ENCODE measurements at regions of chr11 and their contacts with region 1.

Region 1: DNA sequence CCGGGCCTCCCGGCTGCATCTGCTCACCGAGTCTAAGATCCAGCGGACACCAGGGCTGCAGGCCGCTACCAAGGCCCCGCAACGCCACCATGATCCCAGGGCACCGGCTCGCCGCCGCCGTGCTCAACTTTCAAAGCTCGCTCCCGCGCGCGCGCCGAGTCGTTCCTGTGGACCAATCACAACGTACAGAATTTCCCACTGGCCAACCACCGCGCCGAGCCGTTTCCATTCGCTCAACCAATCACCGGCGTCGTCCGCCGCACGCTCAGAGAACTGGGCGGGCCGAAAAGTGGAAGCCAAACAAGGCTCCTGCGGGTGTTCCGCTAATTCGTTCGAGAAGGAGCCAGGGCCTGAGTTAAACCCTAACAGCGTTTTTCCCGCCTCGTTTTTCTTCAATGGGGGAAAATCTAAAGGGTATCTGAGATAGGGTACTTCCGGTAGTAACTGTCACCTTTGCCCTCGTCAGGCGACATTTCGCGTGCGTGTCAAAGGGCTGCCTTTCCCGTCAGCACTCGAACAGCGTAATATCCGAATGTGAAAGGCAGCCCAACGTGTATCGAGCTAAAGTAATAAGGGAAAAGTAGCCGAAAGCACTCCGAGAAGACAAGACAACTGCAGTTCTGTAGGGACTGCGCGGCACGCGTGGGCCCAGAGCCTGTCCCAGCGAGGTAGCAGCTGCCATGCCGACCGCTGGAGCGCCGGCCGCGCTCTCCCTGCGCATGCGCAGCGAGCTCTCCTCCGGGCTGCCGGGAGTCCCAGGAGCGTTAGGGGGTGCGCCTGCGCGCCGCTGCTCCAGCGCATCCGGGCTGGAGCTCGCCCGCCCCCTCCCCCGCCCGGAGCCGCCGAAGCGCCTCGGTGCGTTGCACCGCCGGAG is at the starts of genes NCAPD3 and VPS26B:
- DNase-seq: peak; percentile 99
- ATAC-seq: peak; percentile 80
- H3K4me3 ChIP-seq: peak within 1 kb of the TSS; percentile 92
- H3K27ac ChIP-seq: peak within 1 kb of the TSS; percentile 76
- H3K4me1 ChIP-seq: peaks cover 30% of the 10 kb centered on the region
- H3K27me3 ChIP-seq: no peaks in the 10 kb centered on the region
- CTCF ChIP-seq: no peak
- total RNA-seq, gene NCAPD3: 74.5 and 85.0 TPM in 2 replicates
- total RNA-seq, gene VPS26B: 49.2 and 53.9 TPM in 2 replicates

Region 2: DNA sequence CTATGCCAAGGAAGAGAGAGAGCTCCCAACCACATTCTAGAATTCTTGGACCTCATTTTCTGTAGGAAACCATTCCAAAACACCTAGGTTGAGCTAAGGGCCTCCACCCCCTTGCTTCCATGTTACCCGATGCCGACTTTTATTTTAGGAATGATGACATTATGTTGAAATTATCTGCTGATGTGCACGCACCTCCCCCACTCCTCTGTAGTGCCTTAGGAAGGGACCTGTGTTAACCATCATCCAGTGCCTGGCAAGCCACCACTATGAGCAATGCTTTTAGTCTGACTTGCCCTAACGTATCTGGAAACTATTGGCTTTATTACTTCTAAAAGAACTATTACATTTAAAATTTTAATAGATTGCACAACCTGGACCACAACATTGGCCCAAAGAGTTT is 42.4 kb before region 1 on chr11:
- CTCF ChIA-PET with region 1: no interaction called
- POLR2A ChIA-PET with region 1: no interaction called
- intact Hi-C with region 1: no loop called
- DNase-seq: no peak
- ATAC-seq: no peak
- H3K4me3 ChIP-seq: no peak overlapping the region
- H3K27ac ChIP-seq: no peak overlapping the region
- H3K4me1 ChIP-seq: no peaks in the 10 kb centered on the region
- H3K27me3 ChIP-seq: no peaks in the 10 kb centered on the region
- CTCF ChIP-seq: no peak

Region 3: GRCh38 chr11:134253188-134253993 is 29.3 kb after region 1 on chr11 and contains the starts of genes ACAD8 and THYN1:
- CTCF ChIA-PET with region 1: no interaction called
- POLR2A ChIA-PET with region 1: no interaction called
- intact Hi-C with region 1: loop called (anchors 1 kb)
- DNase-seq: peak; percentile 98
- ATAC-seq: peak; percentile 99
- H3K4me3 ChIP-seq: peak within 1 kb of the TSS; percentile 82
- H3K27ac ChIP-seq: no peak within 1 kb of the TSS
- H3K4me1 ChIP-seq: peaks cover 17% of the 10 kb centered on the region; the same call in 1 of the 2 replicates
- H3K27me3 ChIP-seq: no peaks in the 10 kb centered on the region
- CTCF ChIP-seq: no peak
- total RNA-seq, gene ACAD8: 17.6 and 22.6 TPM in 2 replicates
- total RNA-seq, gene THYN1: 56.2 and 56.6 TPM in 2 replicates

Region 4: DNA sequence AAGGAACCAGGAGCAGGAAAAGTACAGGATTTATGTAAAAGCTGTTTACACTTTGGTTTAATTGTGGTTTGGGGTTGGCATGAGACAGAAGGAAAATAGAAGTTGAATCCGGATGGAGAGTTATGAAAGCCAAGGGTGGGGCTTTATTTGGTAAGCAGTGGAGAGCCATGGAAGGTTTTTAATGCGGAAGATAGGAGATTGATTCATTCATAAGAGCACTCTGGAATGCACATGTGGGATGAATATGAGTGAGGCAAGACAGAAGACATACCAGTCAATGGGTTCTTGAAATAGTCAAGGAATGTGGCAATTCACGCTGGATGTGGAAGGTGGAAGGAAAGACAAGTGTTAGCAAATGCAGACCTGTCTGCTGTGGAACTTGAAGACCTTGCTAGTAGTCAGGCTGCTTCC is 42.8 kb after region 1 on chr11:
- CTCF ChIA-PET with region 1: no interaction called
- POLR2A ChIA-PET with region 1: interaction called, 4 read pairs
- intact Hi-C with region 1: loop called (anchors 1 kb)
- DNase-seq: peak; percentile 97
- ATAC-seq: peak; percentile 90
- H3K4me3 ChIP-seq: peak overlapping the region; percentile 24; the same call in 1 of the 2 replicates
- H3K27ac ChIP-seq: peak overlapping the region; percentile 83
- H3K4me1 ChIP-seq: peaks cover 32% of the 10 kb centered on the region
- H3K27me3 ChIP-seq: no peaks in the 10 kb centered on the region
- CTCF ChIP-seq: no peak

Measured in PC-3 (cell line).